ENCODE measurements at regions of chr11 and their contacts with region 1.

Region 1: GRCh38 chr11:62591448-62592145 is at the start of gene TUT1:
- DNase-seq: peak; percentile 99
- H3K4me3 ChIP-seq: peak within 1 kb of the TSS; percentile 52 to 94 (median 81)
- H3K27ac ChIP-seq: peak within 1 kb of the TSS; percentile 85
- H3K4me1 ChIP-seq: peaks cover 18% of the 10 kb centered on the region
- H3K27me3 ChIP-seq: no peaks in the 10 kb centered on the region
- CTCF ChIP-seq: no peak
- total RNA-seq, gene TUT1: 7.8 to 18.5 TPM

Region 2: GRCh38 chr11:62573592-62574362 is 17.8 kb before region 1 on chr11 and contains the start of gene EEF1G:
- CTCF ChIA-PET with region 1: interaction called, 7 read pairs
- dilution Hi-C with region 1: no loop called
- in situ Hi-C with region 1: no loop called
- intact Hi-C with region 1: loop called (anchors 1 kb)
- DNase-seq: peak; percentile 100
- H3K4me3 ChIP-seq: peak within 1 kb of the TSS; percentile 72 to 91 (median 83)
- H3K27ac ChIP-seq: peak within 1 kb of the TSS; percentile 86
- H3K4me1 ChIP-seq: peaks cover 28% of the 10 kb centered on the region
- H3K27me3 ChIP-seq: no peaks in the 10 kb centered on the region
- CTCF ChIP-seq: no peak
- total RNA-seq, gene EEF1G: 1,183 to 1,218 TPM

Region 3: GRCh38 chr11:62621567-62622470 is 30.2 kb after region 1 on chr11 and contains the start of gene B3GAT3:
- CTCF ChIA-PET with region 1: no interaction called
- dilution Hi-C with region 1: no loop called
- in situ Hi-C with region 1: no loop called
- intact Hi-C with region 1: loop called (anchors 1 kb)
- DNase-seq: peak; percentile 99
- H3K4me3 ChIP-seq: peak within 1 kb of the TSS; percentile 71 to 78 (median 72)
- H3K27ac ChIP-seq: peak within 1 kb of the TSS; percentile 83
- H3K4me1 ChIP-seq: peaks cover 27% of the 10 kb centered on the region
- H3K27me3 ChIP-seq: no peaks in the 10 kb centered on the region
- CTCF ChIP-seq: no peak
- total RNA-seq, gene B3GAT3: 37.8 to 42.0 TPM

Region 4: GRCh38 chr11:62652161-62653006 is 60.8 kb after region 1 on chr11:
- CTCF ChIA-PET with region 1: no interaction called
- dilution Hi-C with region 1: no loop called
- in situ Hi-C with region 1: no loop called
- intact Hi-C with region 1: loop called (anchors 2 kb)
- DNase-seq: no peak
- H3K4me3 ChIP-seq: peak overlapping the region; percentile 78 to 95 (median 90)
- H3K27ac ChIP-seq: peak overlapping the region; percentile 80
- H3K4me1 ChIP-seq: peaks cover 6% of the 10 kb centered on the region
- H3K27me3 ChIP-seq: no peaks in the 10 kb centered on the region
- CTCF ChIP-seq: no peak

Region 5: DNA sequence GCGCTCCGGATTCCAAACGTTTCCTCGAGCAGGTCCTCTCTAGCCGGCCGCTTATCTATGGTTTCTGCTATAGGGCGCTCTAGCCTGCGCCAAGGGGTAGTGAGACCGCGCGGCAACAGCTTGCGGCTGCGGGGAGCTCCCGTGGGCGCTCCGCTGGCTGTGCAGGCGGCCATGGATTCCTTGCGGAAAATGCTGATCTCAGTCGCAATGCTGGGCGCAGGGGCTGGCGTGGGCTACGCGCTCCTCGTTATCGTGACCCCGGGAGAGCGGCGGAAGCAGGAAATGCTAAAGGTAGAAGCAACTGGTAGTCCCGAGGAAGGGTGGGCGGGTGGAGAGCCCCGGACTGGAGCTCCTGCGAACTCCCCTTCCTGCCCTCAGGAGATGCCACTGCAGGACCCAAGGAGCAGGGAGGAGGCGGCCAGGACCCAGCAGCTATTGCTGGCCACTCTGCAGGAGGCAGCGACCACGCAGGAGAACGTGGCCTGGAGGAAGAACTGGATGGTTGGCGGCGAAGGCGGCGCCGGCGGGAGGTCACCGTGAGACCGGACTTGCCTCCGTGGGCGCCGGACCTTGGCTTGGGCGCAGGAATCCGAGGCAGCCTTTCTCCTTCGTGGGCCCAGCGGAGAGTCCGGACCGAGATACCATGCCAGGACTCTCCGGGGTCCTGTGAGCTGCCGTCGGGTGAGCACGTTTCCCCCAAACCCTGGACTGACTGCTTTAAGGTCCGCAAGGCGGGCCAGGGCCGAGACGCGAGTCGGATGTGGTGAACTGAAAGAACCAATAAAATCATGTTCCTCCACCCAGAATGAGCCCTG is 80.2 kb after region 1 on chr11 and contains the starts of genes LBHD1 and UQCC3:
- CTCF ChIA-PET with region 1: no interaction called
- dilution Hi-C with region 1: loop called (anchors 10 kb)
- in situ Hi-C with region 1: loop called in 1 of 2 experiments (anchors 5 kb)
- intact Hi-C with region 1: no loop called
- DNase-seq: peak; percentile 85
- H3K4me3 ChIP-seq: peak within 1 kb of the TSS; percentile 58 to 94 (median 72)
- H3K27ac ChIP-seq: peak within 1 kb of the TSS; percentile 62
- H3K4me1 ChIP-seq: peaks cover 19% of the 10 kb centered on the region
- H3K27me3 ChIP-seq: no peaks in the 10 kb centered on the region
- CTCF ChIP-seq: no peak
- total RNA-seq, gene LBHD1: 5.3 to 8.7 TPM
- total RNA-seq, gene UQCC3: 4.0 to 11.5 TPM

Region 6: GRCh38 chr11:62771144-62772021 is 179.8 kb after region 1 on chr11 and contains the start of gene TAF6L:
- CTCF ChIA-PET with region 1: no interaction called
- dilution Hi-C with region 1: no loop called
- in situ Hi-C with region 1: no loop called
- intact Hi-C with region 1: loop called (anchors 5 kb)
- DNase-seq: peak; percentile 96
- H3K4me3 ChIP-seq: peak within 1 kb of the TSS; percentile 33 to 93 (median 55)
- H3K27ac ChIP-seq: peak within 1 kb of the TSS; percentile 53
- H3K4me1 ChIP-seq: peaks cover 16% of the 10 kb centered on the region
- H3K27me3 ChIP-seq: no peaks in the 10 kb centered on the region
- CTCF ChIP-seq: no peak
- total RNA-seq, gene TAF6L: 16.3 to 22.0 TPM

Measured in mammary epithelial cell (primary cell).